ENCODE measurements at regions of chr14 and their contacts with region 1.

Region 1: DNA sequence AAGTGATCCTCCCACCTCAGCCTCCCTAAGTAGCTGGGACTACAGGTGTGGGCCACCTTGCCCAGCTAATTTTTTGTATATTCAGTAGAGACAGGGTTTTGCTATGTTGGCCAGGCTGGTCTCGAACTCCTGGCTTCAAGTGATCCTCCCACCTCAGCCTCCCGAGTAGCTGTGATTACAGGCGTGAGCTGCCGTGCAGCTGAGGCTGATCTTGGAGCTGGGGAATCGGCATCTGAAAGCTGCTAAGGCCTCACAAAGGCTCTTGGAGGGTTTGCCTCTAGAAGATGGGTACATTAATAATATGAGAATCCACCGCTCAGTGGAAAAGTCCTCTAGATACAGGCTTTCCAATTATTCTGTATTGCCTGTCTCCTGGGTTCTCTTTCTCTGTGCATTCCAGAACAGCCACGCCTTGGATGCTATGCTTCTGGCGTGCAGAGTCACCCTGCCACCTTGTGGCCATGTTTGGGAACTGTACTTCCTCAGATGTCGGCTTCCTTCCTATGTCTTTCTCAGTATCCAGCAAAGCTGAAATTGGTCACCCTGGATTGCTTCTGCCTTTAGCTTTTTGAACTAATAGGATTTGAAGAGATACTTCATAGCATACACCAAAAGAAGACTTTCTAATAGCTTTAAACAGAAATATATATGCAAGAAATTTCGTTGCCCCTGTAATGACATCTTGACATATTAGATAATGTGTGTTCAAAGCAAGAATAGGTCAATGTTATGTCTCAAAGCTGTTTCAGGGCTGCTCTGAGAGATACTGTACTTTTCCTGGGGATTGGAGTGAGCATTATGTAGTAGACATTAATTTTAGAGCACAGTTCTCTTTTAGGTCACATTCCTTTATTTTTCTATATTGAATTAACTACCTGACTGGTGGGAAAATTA is 75.4 kb downstream of the SNAPC1 start:
- DNase-seq: peak; percentile 87
- ATAC-seq: peak; percentile 99
- H3K4me3 Mint-ChIP-seq: no peak overlapping the region
- H3K27ac Mint-ChIP-seq: no peak overlapping the region
- H3K4me1 Mint-ChIP-seq: peaks cover 4% of the 10 kb centered on the region
- H3K27me3 Mint-ChIP-seq: peaks cover 3% of the 10 kb centered on the region
- CTCF ChIP-seq: peak; percentile 98

Region 2: GRCh38 chr14:61280526-61281185 is 556.9 kb before region 1 on chr14:
- CTCF ChIA-PET with region 1: interaction called, 19 read pairs
- POLR2A ChIA-PET with region 1: no interaction called
- intact Hi-C with region 1: no loop called
- DNase-seq: peak; percentile 81
- ATAC-seq: peak; percentile 88
- H3K4me3 Mint-ChIP-seq: peak overlapping the region; percentile 85
- H3K27ac Mint-ChIP-seq: peak overlapping the region; percentile 88
- H3K4me1 Mint-ChIP-seq: peaks cover 30% of the 10 kb centered on the region
- H3K27me3 Mint-ChIP-seq: peaks cover 2% of the 10 kb centered on the region
- CTCF ChIP-seq: peak; percentile 76

Region 3: GRCh38 chr14:61461808-61462275 is 375.7 kb before region 1 on chr14:
- CTCF ChIA-PET with region 1: interaction called, 62 read pairs
- POLR2A ChIA-PET with region 1: no interaction called
- intact Hi-C with region 1: loop called (anchors 2 kb)
- DNase-seq: peak; percentile 42
- ATAC-seq: peak; percentile 22
- H3K4me3 Mint-ChIP-seq: no peak overlapping the region
- H3K27ac Mint-ChIP-seq: peak overlapping the region; percentile 97
- H3K4me1 Mint-ChIP-seq: peaks cover 63% of the 10 kb centered on the region
- H3K27me3 Mint-ChIP-seq: no peaks in the 10 kb centered on the region
- CTCF ChIP-seq: peak; percentile 96

Region 4: GRCh38 chr14:61730756-61731373 is 106.7 kb before region 1 on chr14:
- CTCF ChIA-PET with region 1: interaction called, 11 read pairs
- POLR2A ChIA-PET with region 1: no interaction called
- intact Hi-C with region 1: no loop called
- DNase-seq: no peak
- ATAC-seq: no peak
- H3K4me3 Mint-ChIP-seq: no peak overlapping the region
- H3K27ac Mint-ChIP-seq: peak overlapping the region; percentile 60
- H3K4me1 Mint-ChIP-seq: peaks cover 49% of the 10 kb centered on the region
- H3K27me3 Mint-ChIP-seq: no peaks in the 10 kb centered on the region
- CTCF ChIP-seq: peak; percentile 49

Region 5: DNA sequence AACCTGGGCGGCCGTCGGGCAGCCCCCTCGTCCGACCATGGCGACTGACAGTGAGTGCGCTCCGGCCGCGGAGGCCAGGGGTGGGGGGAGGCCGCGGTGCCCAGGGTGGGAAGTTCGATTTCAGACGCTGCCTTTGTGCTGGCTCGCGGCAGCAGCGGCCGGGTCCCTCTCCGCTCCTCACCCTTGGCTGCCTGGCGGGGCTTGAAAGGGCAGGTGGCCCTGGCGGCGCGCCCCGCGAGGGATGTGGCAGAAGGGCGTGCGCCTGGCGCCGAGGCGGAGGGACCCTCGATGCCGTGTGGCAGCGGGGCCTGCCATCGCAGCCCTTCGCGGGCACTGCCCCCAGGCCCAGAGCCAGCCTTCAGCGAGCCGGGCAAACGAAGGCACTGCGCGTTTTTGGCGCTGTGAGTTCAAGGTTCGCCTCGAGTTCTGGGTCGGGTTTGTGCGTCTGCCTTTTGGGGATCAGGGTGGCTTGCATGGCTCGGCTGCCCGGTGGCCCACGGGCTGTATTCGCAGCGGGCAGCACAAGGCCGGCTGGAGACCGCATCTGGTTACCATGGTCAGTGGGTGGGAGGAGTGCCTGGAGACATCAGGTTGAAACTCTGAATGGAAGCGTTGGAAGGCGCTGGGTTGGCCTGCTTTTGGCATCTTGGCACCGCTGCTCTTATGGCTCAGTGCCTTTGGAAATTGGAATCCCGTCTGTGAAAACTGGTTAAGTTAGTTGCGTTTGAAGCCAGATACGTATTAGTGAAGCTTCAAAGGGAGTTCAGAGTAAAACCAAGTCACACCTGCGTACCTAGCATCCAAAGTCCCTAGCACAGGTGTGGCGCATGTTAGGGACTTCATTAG is 24.6 kb before region 1 on chr14:
- CTCF ChIA-PET with region 1: interaction called, 16 read pairs
- POLR2A ChIA-PET with region 1: interaction called, 4 read pairs
- intact Hi-C with region 1: no loop called
- DNase-seq: peak; percentile 27
- ATAC-seq: peak; percentile 64
- H3K4me3 Mint-ChIP-seq: peak overlapping the region; percentile 69
- H3K27ac Mint-ChIP-seq: no peak overlapping the region
- H3K4me1 Mint-ChIP-seq: peaks cover 9% of the 10 kb centered on the region
- H3K27me3 Mint-ChIP-seq: peaks cover 46% of the 10 kb centered on the region
- CTCF ChIP-seq: no peak

Region 6: DNA sequence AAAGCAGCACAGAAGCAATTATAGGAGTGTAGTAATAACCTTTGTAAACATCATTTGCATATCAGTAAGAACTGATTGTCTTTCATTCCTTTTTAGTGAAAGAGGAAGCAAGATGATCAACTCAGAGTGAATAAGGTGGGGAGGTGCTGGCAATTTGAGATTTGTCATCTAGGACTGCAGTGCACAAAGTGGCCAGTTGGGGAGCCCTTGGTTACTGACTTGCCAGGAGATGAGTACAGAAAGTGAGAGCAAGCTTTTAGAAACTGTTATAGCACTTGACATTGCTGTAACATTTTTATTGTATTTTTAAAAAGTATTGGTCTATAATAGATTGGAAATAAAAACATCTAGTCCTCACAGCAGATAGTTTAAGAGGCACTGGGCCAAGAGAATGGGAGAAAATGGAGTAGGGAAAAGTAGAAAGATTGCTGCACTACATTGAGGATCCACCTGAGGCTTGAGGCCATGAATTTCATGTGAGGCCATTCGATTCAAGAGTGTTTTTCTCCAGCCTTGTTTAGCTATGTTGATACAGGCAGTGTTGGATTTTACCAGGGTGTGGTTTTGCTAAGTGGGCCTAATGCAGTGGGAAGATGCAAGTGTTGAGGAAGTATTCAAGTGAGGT is 22.8 kb after region 1 on chr14:
- CTCF ChIA-PET with region 1: interaction called, 17 read pairs
- POLR2A ChIA-PET with region 1: no interaction called
- intact Hi-C with region 1: no loop called
- DNase-seq: peak; percentile 89
- ATAC-seq: peak; percentile 100
- H3K4me3 Mint-ChIP-seq: no peak overlapping the region
- H3K27ac Mint-ChIP-seq: no peak overlapping the region
- H3K4me1 Mint-ChIP-seq: no peaks in the 10 kb centered on the region
- H3K27me3 Mint-ChIP-seq: peaks cover 16% of the 10 kb centered on the region
- CTCF ChIP-seq: peak; percentile 93

Region 7: GRCh38 chr14:61904181-61904580 is 66.6 kb after region 1 on chr14:
- CTCF ChIA-PET with region 1: no interaction called
- POLR2A ChIA-PET with region 1: no interaction called
- intact Hi-C with region 1: no loop called
- DNase-seq: no peak
- ATAC-seq: no peak
- H3K4me3 Mint-ChIP-seq: no peak overlapping the region
- H3K27ac Mint-ChIP-seq: no peak overlapping the region
- H3K4me1 Mint-ChIP-seq: no peaks in the 10 kb centered on the region
- H3K27me3 Mint-ChIP-seq: no peaks in the 10 kb centered on the region
- CTCF ChIP-seq: no peak

Region 8: DNA sequence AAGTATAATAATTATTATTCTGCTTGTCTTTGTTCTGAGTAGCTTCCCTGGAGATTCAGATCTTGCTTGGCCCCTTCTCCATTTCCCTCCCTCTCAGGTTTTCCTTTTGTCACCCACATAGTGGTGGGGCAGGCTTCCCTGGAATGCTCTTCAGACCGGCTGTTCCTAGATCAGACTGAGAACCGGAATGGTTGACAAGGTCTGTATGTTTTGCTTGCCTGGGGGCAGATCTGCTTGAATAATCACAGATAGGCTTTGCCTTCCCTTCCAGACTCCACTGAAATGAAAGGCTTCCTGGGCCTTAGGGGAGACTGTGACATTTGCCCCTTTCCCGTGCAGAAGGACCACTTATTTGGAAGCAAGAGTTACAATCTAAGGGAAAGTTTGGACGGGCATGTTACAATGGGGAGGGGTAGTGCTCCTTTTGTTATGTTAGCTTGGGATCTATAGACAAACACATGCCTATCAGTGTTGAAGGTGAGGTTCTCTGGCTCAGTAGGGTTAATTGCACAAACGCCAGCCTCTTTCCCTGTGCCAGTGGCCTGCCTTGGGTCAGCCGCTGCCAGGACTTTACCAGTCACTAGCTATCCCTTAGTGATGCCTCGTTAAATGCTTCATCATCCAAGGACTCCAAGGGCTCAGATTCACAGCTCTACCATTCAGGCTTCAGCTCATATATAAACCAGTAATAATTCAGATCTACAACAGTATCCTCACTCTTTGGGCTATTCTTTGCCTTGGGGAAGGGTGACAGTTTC is 103.3 kb after region 1 on chr14:
- CTCF ChIA-PET with region 1: no interaction called
- POLR2A ChIA-PET with region 1: no interaction called
- intact Hi-C with region 1: no loop called
- DNase-seq: no peak
- ATAC-seq: no peak
- H3K4me3 Mint-ChIP-seq: no peak overlapping the region
- H3K27ac Mint-ChIP-seq: no peak overlapping the region
- H3K4me1 Mint-ChIP-seq: no peaks in the 10 kb centered on the region
- H3K27me3 Mint-ChIP-seq: peaks cover 30% of the 10 kb centered on the region
- CTCF ChIP-seq: no peak